Activated naive CD4-positive, alpha-beta T cell treated with anti-CD3 and anti-CD28 coated beads for 36 hours (primary cell): ENCODE measurements at regions of chr9 and their contacts with region 1.

Region 1: DNA sequence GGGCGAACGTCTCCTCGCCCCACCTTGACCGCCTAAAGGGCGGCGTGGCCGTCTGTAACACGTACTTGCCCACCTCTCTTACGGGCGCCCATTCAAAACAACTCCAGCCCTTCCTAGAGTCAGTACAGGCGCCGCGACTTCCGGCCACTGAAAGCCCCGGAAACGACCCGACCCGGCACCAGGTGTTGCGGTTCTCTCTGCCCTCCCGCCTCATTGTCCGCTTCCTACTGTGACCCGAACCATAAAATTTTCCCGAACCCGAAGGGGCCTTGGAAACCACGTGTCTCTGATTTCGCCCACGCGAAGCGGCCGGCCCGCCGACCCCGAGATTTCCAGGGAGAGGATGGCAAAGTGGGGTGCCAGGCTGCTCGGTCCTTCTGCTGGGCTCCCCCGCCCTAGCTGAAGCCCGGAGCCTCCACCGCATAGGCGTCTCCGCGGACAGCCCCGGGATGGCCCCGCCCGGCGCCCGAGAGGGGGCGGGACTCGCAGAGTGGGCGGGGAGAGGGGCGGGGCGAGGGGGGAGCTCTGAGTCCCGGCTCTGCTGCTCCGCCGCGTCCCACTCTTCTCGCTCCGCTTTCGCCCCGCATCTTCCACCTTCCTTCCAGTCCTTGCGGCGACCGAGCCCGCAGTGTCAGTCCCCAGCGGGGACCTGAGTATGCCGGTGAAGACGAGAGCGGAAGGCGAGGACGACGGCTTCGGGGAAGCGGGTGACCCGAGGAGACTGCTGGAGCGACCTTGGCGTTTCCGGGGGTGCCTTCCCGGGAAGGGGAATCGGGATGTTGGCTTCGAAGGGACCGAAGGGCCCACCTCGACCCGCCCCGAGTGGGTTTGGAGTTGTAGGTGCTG is 684 bp upstream of the PTGES2 start:
- DNase-seq: peak; percentile 87
- H3K4me3 Mint-ChIP-seq: peak overlapping the region; percentile 95
- H3K27ac Mint-ChIP-seq: peak overlapping the region; percentile 95
- H3K4me1 Mint-ChIP-seq: peaks cover 30% of the 10 kb centered on the region
- H3K27me3 Mint-ChIP-seq: no peaks in the 10 kb centered on the region

Region 2: DNA sequence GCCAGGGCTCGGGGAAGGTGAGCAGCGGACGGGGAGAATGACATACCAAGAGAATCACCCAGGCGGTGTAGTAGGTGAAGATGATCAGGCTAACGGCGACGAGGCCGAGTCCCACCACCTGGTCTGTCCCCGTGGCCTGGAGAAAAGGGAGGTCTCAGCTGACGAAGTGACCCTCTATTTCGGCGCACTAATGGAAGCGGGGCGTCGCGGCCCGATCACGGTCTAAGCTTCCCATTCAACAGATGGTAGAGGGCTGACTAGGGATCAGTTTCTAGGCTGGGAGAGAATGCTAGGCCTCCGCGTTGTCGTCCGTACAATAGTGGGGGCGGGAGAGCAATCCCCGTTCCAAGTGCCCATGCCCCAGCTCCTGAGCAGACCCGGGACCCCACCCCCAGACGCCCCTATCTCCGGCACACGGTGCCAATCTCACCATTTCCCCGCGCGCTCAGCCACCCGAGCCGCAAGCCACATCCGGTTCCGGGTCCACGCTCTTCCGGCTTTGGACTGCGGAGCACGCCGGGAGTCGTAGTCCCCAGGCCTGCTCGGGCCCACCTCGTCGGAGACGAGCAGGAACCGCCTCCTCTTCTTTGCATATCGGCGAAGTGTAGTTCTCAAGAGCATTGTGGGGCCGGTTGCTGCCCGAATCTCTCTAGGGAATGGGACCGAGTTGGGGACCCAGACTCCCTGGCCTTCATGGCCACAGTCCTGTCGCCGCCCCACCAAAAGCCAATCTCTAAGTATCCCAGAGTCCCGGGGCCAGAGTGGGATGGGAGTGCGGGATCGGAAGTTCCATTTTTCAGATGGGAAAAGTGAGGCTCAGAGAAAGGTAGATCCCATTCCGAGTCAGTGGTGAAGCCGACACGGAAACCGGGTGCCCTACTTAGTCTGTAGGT is 190.6 kb before region 1 on chr9 and contains the start of gene DPM2:
- CTCF ChIA-PET with region 1: no interaction called
- intact Hi-C with region 1: loop called (anchors 2 kb)
- DNase-seq: peak; percentile 87
- H3K4me3 Mint-ChIP-seq: peak within 1 kb of the TSS; percentile 100
- H3K27ac Mint-ChIP-seq: peak within 1 kb of the TSS; percentile 96
- H3K4me1 Mint-ChIP-seq: peaks cover 43% of the 10 kb centered on the region
- H3K27me3 Mint-ChIP-seq: no peaks in the 10 kb centered on the region
- total RNA-seq, gene DPM2: 41.6 to 43.4 TPM

Region 3: DNA sequence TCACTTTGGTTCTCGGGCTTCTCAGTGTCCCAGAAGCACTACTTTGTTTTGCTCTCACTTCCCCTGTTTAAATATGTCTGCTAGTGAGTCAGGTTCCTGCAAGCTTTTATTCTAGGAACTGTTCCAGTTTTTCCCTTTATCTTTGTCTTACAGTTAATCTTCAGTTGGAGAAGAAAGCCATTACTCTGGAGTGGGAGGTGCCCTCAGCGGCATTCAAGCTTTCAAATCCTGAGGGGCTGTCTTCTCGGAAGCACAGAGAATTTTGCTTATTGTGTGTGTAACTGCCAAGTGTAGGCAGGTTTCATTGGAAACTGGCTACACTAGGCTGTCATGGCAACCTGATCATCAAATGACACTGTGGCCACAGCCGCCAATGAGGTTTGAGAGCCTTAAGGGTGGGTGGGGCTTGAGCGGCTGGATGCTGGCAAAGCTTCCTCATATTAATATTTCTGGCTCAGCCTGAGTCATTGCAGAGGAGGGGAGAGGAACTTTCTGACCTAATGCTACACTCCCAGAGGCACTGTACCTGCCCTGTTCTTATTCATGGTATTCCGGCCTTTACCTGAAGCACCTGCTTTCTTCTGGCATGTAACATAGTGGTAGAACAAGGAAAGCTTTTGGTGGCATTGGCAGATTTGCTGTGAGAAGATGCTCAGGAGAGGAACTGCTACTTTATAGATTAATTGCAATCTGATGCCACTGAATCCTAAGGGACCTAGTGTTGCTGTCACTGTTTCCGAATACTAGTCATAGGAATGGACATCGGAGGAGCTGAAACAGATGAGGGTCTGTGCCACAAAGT is 33.8 kb before region 1 on chr9:
- CTCF ChIA-PET with region 1: interaction called, 3 read pairs
- intact Hi-C with region 1: loop called (anchors 1 kb)
- DNase-seq: peak; percentile 91
- H3K4me3 Mint-ChIP-seq: peak overlapping the region; percentile 65
- H3K27ac Mint-ChIP-seq: peak overlapping the region; percentile 95
- H3K4me1 Mint-ChIP-seq: peaks cover 87% of the 10 kb centered on the region
- H3K27me3 Mint-ChIP-seq: no peaks in the 10 kb centered on the region

Region 4: GRCh38 chr9:128159784-128160602 is 31.8 kb after region 1 on chr9 and contains the start of gene BBLN:
- CTCF ChIA-PET with region 1: interaction called, 3 read pairs
- intact Hi-C with region 1: loop called (anchors 1 kb)
- DNase-seq: peak; percentile 96
- H3K4me3 Mint-ChIP-seq: peak within 1 kb of the TSS; percentile 77
- H3K27ac Mint-ChIP-seq: peak within 1 kb of the TSS; percentile 85
- H3K4me1 Mint-ChIP-seq: peaks cover 16% of the 10 kb centered on the region
- H3K27me3 Mint-ChIP-seq: no peaks in the 10 kb centered on the region
- total RNA-seq, gene BBLN: 73.3 to 77.7 TPM

Region 5: DNA sequence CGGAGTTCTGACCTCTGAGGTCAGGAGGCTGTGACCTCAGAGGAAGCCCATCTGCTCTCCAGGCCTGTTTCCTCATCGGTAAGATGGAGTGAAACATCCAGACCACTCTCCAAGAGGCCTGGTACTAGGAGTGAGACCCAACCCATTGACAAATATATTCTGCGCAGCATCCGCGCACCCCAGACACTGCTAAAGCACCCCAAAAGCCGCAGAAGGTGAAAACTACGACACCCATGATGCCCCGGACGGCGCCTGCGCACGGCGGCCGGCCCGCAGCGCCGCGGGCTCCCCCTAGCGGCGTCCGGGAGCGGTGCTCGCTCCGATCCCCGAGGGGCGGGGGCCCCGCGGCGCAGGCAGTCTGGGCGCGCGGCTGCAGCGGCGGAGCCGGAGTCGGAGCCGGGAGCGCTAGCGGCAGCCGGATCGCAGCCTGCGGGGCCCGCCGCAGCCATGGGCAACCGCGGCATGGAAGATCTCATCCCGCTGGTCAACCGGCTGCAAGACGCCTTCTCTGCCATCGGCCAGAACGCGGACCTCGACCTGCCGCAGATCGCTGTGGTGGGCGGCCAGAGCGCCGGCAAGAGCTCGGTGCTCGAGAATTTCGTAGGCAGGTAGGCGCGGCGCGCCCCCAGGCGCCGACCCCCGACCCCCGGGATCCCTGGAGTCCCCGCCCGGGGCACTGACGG is 75.0 kb after region 1 on chr9 and contains the start of gene DNM1:
- CTCF ChIA-PET with region 1: no interaction called
- intact Hi-C with region 1: loop called (anchors 2 kb)
- DNase-seq: peak; percentile 61
- H3K4me3 Mint-ChIP-seq: peak within 1 kb of the TSS; percentile 69
- H3K27ac Mint-ChIP-seq: no peak within 1 kb of the TSS
- H3K4me1 Mint-ChIP-seq: peaks cover 12% of the 10 kb centered on the region
- H3K27me3 Mint-ChIP-seq: peaks cover 8% of the 10 kb centered on the region
- total RNA-seq, gene DNM1: 0.07 to 0.77 TPM

Region 6: GRCh38 chr9:128275996-128276573 is 147.9 kb after region 1 on chr9 and contains the starts of genes GOLGA2 and SWI5:
- CTCF ChIA-PET with region 1: no interaction called
- intact Hi-C with region 1: loop called (anchors 2 kb)
- DNase-seq: peak; percentile 100
- H3K4me3 Mint-ChIP-seq: peak within 1 kb of the TSS; percentile 94
- H3K27ac Mint-ChIP-seq: peak within 1 kb of the TSS; percentile 86
- H3K4me1 Mint-ChIP-seq: peaks cover 32% of the 10 kb centered on the region
- H3K27me3 Mint-ChIP-seq: no peaks in the 10 kb centered on the region
- total RNA-seq, gene GOLGA2: 33.3 to 34.4 TPM
- total RNA-seq, gene SWI5: 13.3 to 15.5 TPM

Region 7: GRCh38 chr9:128339771-128340690 is 211.8 kb after region 1 on chr9 and contains the start of gene SLC27A4:
- CTCF ChIA-PET with region 1: no interaction called
- intact Hi-C with region 1: loop called (anchors 2 kb)
- DNase-seq: peak; percentile 78
- H3K4me3 Mint-ChIP-seq: peak within 1 kb of the TSS; percentile 93
- H3K27ac Mint-ChIP-seq: peak within 1 kb of the TSS; percentile 69
- H3K4me1 Mint-ChIP-seq: peaks cover 5% of the 10 kb centered on the region
- H3K27me3 Mint-ChIP-seq: no peaks in the 10 kb centered on the region
- total RNA-seq, gene SLC27A4: 5.7 to 6.8 TPM